Endothelial cell of umbilical vein (primary cell): ENCODE measurements at regions of chr4 and their contacts with region 1.

Region 1: DNA sequence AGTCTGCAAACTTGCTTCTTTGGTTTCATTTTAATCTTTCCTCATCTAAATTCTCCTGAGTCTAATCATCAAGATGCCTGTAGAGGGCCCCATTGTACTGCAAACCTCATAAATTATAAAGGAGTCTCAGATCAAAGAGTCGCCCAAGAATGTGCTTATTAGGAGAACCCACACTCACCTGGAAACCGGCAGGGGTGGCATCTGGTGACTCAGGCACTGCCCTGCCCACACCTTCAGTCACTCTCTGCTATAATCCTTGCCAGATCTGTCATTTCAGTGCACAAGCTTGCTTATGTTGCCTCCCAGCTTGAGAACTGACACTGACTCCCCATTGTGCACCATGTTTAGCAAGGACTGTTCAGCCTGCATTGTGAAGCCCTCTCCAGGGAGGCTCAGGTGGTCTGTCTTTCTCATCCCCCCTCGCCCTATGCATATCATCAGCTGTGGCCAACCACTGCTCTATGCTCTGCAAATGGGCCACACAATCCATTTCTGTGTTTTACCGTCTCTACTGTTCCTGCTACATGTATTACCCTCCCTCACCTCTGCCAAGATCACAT is 12.4 kb downstream of the EPGN start:
- DNase-seq: peak; percentile 74
- H3K4me3 ChIP-seq: no peak overlapping the region
- H3K27ac ChIP-seq: no peak overlapping the region
- H3K4me1 ChIP-seq: no peaks in the 10 kb centered on the region
- H3K27me3 ChIP-seq: no peaks in the 10 kb centered on the region
- CTCF ChIP-seq: peak; percentile 44
- POLR2A ChIP-seq: no peak

Region 2: GRCh38 chr4:73698217-73698616 is 622.4 kb before region 1 on chr4:
- CTCF ChIA-PET with region 1: no interaction called
- POLR2A ChIA-PET with region 1: no interaction called
- dilution Hi-C with region 1: no loop called
- intact Hi-C with region 1: no loop called
- DNase-seq: peak; percentile 95
- H3K4me3 ChIP-seq: no peak overlapping the region
- H3K27ac ChIP-seq: peak overlapping the region; percentile 38
- H3K4me1 ChIP-seq: peaks cover 19% of the 10 kb centered on the region
- H3K27me3 ChIP-seq: no peaks in the 10 kb centered on the region
- CTCF ChIP-seq: no peak
- POLR2A ChIP-seq: no peak

Region 3: GRCh38 chr4:74032064-74032463 is 288.6 kb before region 1 on chr4:
- CTCF ChIA-PET with region 1: no interaction called
- POLR2A ChIA-PET with region 1: no interaction called
- dilution Hi-C with region 1: no loop called
- intact Hi-C with region 1: no loop called
- DNase-seq: peak; percentile 70
- H3K4me3 ChIP-seq: no peak overlapping the region
- H3K27ac ChIP-seq: no peak overlapping the region
- H3K4me1 ChIP-seq: peaks cover 9% of the 10 kb centered on the region
- H3K27me3 ChIP-seq: no peaks in the 10 kb centered on the region
- CTCF ChIP-seq: no peak
- POLR2A ChIP-seq: no peak

Region 4: DNA sequence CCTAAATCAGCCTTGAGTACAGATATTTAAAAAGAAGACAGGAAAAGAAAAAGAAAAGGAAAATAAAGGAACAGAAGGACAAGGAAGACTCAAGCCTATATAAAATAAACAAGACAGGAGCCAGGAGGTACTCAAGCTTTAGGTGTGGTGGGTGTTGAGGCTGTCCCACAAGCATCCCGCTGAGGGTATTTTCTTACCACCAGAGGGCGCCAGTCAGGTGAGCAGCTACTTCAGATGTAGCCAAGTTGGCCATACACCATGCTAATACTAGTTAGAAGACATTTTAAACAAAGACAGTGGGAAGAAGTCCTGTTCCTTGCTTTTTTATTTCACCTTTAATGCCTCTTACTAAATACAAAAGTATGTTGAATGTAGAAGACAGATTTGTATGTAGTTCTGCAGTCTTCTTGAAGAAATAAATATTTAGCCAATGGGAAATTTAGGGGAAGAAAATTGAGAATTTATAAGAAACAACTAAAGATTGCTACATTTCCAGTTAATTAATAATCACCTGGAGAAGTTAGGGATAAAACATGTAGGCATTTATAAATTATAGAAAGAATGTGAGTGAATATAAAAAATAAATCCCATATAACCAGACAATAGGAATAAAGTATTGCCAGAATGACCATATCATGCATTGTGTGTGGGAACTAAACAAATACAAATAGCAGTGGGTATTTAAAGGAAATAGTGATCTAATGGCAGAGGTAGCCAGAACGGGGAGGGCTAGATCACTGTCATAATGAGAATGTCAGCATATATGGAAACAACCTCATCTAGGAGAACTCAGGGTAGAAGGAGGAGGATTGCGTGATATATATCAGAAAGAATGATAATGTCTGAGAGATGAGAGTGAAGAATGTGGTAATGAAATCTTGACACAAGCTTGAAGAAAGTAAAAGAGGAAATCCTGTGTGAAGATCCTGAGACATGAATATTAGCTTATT is 91.7 kb before region 1 on chr4:
- CTCF ChIA-PET with region 1: interaction called, 45 read pairs
- POLR2A ChIA-PET with region 1: no interaction called
- dilution Hi-C with region 1: no loop called
- intact Hi-C with region 1: no loop called
- DNase-seq: peak; percentile 74
- H3K4me3 ChIP-seq: no peak overlapping the region
- H3K27ac ChIP-seq: no peak overlapping the region
- H3K4me1 ChIP-seq: peaks cover 23% of the 10 kb centered on the region
- H3K27me3 ChIP-seq: no peaks in the 10 kb centered on the region
- CTCF ChIP-seq: peak; percentile 86 to 95
- POLR2A ChIP-seq: no peak

Region 5: DNA sequence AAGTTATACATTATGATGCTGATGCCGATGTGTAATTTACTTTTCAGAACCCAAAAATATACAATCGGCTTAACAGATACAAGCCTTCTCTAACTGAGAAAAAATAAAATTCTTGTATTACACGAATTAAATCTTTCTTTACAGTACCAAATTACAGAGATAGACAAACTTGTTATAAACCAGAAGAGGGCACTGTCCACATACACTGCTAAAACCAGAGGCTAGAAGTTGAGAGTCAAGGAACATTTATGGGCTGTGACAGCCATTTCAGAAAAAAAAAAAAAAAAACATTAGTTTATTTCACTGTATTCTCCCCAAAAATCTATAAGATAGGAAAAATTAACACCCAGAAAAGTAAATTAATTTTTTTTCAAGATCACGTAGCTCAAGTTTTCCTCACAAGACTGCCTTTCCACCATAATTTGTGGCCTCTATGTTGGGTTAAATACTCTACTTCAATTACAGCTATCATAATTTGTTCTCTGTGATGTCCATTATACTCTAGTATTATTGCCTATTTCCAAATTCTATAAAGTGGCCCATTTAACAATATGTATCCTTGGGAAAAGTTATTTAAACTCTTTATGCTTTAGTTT is 56.3 kb after region 1 on chr4:
- CTCF ChIA-PET with region 1: interaction called, 13 read pairs
- POLR2A ChIA-PET with region 1: no interaction called
- dilution Hi-C with region 1: no loop called
- intact Hi-C with region 1: no loop called
- DNase-seq: peak; percentile 67
- H3K4me3 ChIP-seq: no peak overlapping the region
- H3K27ac ChIP-seq: no peak overlapping the region
- H3K4me1 ChIP-seq: peaks cover 7% of the 10 kb centered on the region
- H3K27me3 ChIP-seq: no peaks in the 10 kb centered on the region
- CTCF ChIP-seq: peak; percentile 31
- POLR2A ChIP-seq: no peak

Region 6: DNA sequence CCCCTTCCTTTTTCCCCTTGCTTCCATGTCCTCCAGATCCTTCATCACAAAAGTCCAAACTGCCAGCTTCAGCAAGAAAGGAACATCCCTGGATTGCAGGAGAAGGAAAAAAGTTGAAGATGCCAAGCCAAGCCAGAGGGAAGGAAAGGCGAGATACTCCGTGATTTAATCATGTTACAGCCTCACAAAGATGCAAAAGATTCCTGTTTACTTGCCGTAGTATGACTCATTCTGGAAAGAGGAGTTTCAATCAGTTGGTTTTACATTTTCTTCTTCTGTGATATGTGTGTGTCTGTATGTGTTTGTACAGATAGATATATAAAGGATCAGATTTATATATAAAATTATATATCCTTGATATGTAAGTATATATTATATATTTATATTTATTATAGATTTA is 404.3 kb after region 1 on chr4:
- CTCF ChIA-PET with region 1: no interaction called
- POLR2A ChIA-PET with region 1: no interaction called
- dilution Hi-C with region 1: no loop called
- intact Hi-C with region 1: no loop called
- DNase-seq: no peak
- H3K4me3 ChIP-seq: no peak overlapping the region
- H3K27ac ChIP-seq: no peak overlapping the region
- H3K4me1 ChIP-seq: no peaks in the 10 kb centered on the region
- H3K27me3 ChIP-seq: peaks cover 6 to 8% of the 10 kb centered on the region in 2 experiments
- CTCF ChIP-seq: no peak
- POLR2A ChIP-seq: no peak

Region 7: DNA sequence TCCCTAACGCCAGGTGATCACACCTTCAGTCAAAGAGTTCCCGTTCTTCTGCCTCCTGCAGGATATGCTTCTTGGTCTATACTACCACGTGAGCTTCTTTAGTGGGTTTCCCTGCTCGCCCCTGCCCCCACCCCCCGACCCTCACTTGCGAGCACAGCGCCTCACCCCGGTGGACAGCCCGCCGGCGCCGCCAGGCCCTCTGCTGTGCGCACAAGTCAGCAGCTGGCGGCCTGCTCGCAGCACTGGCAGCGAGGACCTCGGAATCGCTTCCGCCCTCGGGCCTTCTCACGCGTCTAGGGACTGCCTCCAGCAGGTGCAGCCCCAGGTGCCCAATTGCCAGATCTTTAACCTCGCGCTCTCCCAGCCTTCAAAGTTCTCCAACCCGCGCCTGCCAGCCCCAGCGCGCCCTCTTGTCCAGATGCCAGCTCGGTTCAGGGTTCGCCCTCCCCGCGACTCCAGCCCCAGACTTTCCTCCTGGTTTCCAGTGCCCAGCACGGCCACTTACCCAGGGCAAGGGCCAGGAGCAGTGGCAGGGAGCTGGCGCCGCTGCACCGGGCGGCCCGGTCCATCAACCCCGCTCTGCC is 473.2 kb after region 1 on chr4:
- CTCF ChIA-PET with region 1: interaction called, 7 read pairs
- POLR2A ChIA-PET with region 1: no interaction called
- dilution Hi-C with region 1: no loop called
- intact Hi-C with region 1: loop called (anchors 2 kb)
- DNase-seq: peak; percentile 26
- H3K4me3 ChIP-seq: peak overlapping the region; percentile 16 to 50 (median 39)
- H3K27ac ChIP-seq: no peak overlapping the region
- H3K4me1 ChIP-seq: peaks cover 4% of the 10 kb centered on the region
- H3K27me3 ChIP-seq: peaks cover 29 to 32% of the 10 kb centered on the region in 2 experiments
- CTCF ChIP-seq: peak; percentile 43 to 65
- POLR2A ChIP-seq: no peak

Region 8: DNA sequence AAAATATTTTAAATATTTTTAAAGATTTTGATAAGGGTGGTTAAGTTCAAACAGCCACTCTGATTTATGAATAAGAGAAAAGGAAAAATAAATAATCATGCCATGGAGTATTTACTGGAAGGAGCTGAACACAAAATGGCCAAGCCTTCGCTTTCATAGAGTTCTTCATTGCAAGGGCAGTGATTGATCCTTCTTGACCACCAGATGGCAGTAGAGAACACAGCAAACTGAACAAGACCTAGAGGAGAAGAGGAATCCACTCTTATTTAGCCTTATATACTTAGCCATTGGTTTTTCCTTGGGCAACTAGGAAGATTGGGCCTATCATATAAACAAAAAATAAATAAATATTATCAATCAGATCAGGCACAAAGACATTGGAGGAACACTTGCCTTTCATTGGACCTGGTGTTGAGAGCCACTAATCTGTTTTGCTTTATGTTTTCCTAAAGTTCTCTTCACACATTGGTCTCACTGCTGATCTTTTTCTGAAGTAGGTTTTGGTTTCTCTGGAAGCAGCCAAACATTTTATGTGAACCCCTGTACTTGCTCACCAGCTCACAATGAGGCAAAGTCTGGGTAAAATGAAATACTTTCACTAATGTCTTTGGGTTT is 554.2 kb after region 1 on chr4:
- CTCF ChIA-PET with region 1: interaction called, 30 read pairs
- POLR2A ChIA-PET with region 1: no interaction called
- dilution Hi-C with region 1: no loop called
- intact Hi-C with region 1: loop called (anchors 2 kb)
- DNase-seq: peak; percentile 67
- H3K4me3 ChIP-seq: no peak overlapping the region
- H3K27ac ChIP-seq: no peak overlapping the region
- H3K4me1 ChIP-seq: peaks cover 2% of the 10 kb centered on the region
- H3K27me3 ChIP-seq: peaks cover 1 to 9% of the 10 kb centered on the region in 2 experiments
- CTCF ChIP-seq: peak; percentile 72 to 89
- POLR2A ChIP-seq: no peak